ENCODE measurements at regions of chr15 and their contacts with region 1.

Region 1: GRCh38 chr15:71114896-71115554 is at the start of gene THSD4:
- DNase-seq: peak; percentile 83
- total RNA-seq, gene THSD4: 116 TPM

Region 2: GRCh38 chr15:71146580-71146982 is 31.6 kb after region 1 on chr15:
- intact Hi-C with region 1: loop called (anchors 2 kb)
- DNase-seq: no peak

Region 3: GRCh38 chr15:71231758-71232157 is 116.7 kb after region 1 on chr15:
- intact Hi-C with region 1: loop called (anchors 5 kb)
- DNase-seq: no peak

Region 4: GRCh38 chr15:71329497-71330260 is 214.7 kb after region 1 on chr15:
- intact Hi-C with region 1: loop called (anchors 5 kb)
- DNase-seq: no peak